Transverse colon (tissue), 4 donors: ENCODE measurements at regions of chr4 and their contacts with region 1.

Region 1: GRCh38 chr4:113945906-113946305 is 33.5 kb downstream of the ARSJ start:
- DNase-seq: no peak
- H3K4me3 ChIP-seq: no peak overlapping the region
- H3K27ac ChIP-seq: no peak overlapping the region
- H3K4me1 ChIP-seq: peaks cover 0 to 11% (median 3%) of the 10 kb centered on the region in 4 donors
- H3K27me3 ChIP-seq: no peaks in the 10 kb centered on the region
- CTCF ChIP-seq: no peak
- EP300 ChIP-seq: no peak
- POLR2A ChIP-seq: no peak

Region 2: GRCh38 chr4:114263233-114263632 is 317.3 kb after region 1 on chr4:
- in situ Hi-C with region 1: no loop called
- intact Hi-C with region 1: no loop called
- DNase-seq: no peak
- H3K4me3 ChIP-seq: no peak overlapping the region
- H3K27ac ChIP-seq: no peak overlapping the region
- H3K4me1 ChIP-seq: no peaks in the 10 kb centered on the region
- H3K27me3 ChIP-seq: no peaks in the 10 kb centered on the region
- CTCF ChIP-seq: no peak
- EP300 ChIP-seq: no peak
- POLR2A ChIP-seq: no peak

Region 3: DNA sequence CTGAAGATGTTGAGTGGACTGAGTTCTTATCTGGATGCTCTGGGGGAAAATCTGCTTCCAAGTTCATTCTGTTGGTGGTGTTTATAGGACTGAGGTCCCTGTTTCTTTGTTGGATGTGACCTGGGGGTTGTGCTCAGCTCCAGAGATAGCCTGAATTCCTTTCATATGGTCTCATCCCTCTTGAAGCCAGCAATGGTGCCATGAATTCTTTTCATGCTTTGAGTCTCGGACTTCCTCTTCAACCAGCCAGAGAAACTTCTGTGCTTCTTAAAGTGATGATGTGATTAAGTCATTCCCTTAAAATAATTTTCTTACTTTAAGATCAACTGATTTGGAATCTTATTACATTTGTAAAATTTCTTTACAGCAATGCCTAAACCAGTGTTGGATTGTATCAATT is 419.0 kb after region 1 on chr4:
- in situ Hi-C with region 1: loop called in 1 of 4 experiments (anchors 25 kb)
- intact Hi-C with region 1: no loop called
- DNase-seq: no peak
- H3K4me3 ChIP-seq: no peak overlapping the region
- H3K27ac ChIP-seq: peak overlapping the region in 1 of 4 donors; percentile 31
- H3K4me1 ChIP-seq: no peaks in the 10 kb centered on the region
- H3K27me3 ChIP-seq: no peaks in the 10 kb centered on the region
- CTCF ChIP-seq: no peak
- EP300 ChIP-seq: no peak
- POLR2A ChIP-seq: no peak

Region 4: DNA sequence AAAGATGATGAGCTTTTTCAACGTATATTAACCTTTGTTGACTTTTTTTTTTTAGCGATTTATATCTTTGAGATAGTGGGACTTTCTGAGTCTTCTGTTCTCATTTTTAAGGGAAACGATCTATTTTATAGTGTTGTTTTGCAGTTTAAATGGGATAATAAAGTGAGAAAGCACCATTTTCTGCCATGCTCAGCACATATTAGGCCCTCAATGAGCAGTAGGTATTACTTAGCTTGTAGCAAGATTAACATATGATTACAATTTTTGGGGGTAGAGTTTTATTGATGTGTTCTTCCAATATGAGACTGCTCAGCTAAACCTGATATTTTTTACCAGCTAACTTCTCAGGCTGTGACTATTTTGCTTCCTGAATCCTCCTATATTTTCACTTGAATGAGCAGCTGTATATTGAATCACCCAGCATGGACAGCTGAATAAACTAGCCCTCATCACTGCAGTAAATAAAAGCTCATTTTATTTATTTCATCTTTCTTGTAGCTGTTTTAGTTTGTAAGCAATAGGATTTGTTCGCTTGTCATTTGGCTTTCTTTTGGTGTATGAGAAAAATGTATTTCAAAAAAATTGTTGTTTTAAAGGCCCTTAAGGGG is 696.4 kb after region 1 on chr4:
- in situ Hi-C with region 1: no loop called
- intact Hi-C with region 1: no loop called
- DNase-seq: no peak
- H3K4me3 ChIP-seq: no peak overlapping the region
- H3K27ac ChIP-seq: no peak overlapping the region
- H3K4me1 ChIP-seq: no peaks in the 10 kb centered on the region
- H3K27me3 ChIP-seq: no peaks in the 10 kb centered on the region
- CTCF ChIP-seq: no peak
- EP300 ChIP-seq: no peak
- POLR2A ChIP-seq: no peak